Activated CD8-positive, alpha-beta T cell treated with anti-CD3 and anti-CD28 coated beads, Interleukin-2, amount 10 ng/mL, durations not matched to agents 7 days and 5 days (primary cell): ENCODE measurements at regions of chr7 and their contacts with region 1.

Region 1: GRCh38 chr7:111029574-111030251 is 61.2 kb upstream of the LRRN3 start:
- DNase-seq: peak; percentile 37
- ATAC-seq: no peak
- H3K4me3 Mint-ChIP-seq: peak overlapping the region; percentile 32
- H3K27ac Mint-ChIP-seq: peak overlapping the region; percentile 72
- H3K4me1 Mint-ChIP-seq: peaks cover 55% of the 10 kb centered on the region
- H3K27me3 Mint-ChIP-seq: no peaks in the 10 kb centered on the region

Region 2: GRCh38 chr7:111076205-111076604 is 46.5 kb after region 1 on chr7:
- CTCF ChIA-PET with region 1: interaction called, 28 read pairs
- POLR2A ChIA-PET with region 1: interaction called, 69 read pairs
- DNase-seq: peak; percentile 54
- ATAC-seq: peak; percentile 61
- H3K4me3 Mint-ChIP-seq: no peak overlapping the region
- H3K27ac Mint-ChIP-seq: peak overlapping the region; percentile 53
- H3K4me1 Mint-ChIP-seq: peaks cover 73% of the 10 kb centered on the region
- H3K27me3 Mint-ChIP-seq: no peaks in the 10 kb centered on the region

Region 3: DNA sequence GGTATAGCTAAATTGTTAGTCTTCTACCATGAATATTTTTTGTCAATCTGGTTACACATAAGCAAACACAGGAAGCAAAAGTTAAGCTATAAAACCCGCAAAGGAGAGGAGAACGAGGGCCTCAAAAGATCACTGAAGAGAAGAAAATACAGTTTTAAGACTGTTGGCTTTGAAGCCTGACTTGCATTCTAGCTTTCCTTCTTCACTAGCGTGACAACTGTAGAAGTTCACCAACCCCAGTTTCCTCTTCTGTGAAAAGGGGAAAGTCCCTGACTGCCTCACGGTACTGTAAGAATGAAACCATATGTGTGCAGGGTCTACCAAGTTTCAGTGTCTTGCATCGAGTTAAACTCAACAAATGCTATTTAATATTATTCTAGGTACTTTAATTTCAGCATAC is 53.7 kb after region 1 on chr7:
- CTCF ChIA-PET with region 1: interaction called, 7 read pairs
- POLR2A ChIA-PET with region 1: interaction called, 69 read pairs
- DNase-seq: peak; percentile 86
- ATAC-seq: peak; percentile 88
- H3K4me3 Mint-ChIP-seq: peak overlapping the region; percentile 69
- H3K27ac Mint-ChIP-seq: peak overlapping the region; percentile 93
- H3K4me1 Mint-ChIP-seq: peaks cover 76% of the 10 kb centered on the region
- H3K27me3 Mint-ChIP-seq: no peaks in the 10 kb centered on the region

Region 4: GRCh38 chr7:111089822-111090426 is 60.2 kb after region 1 on chr7:
- CTCF ChIA-PET with region 1: interaction called, 6 read pairs
- POLR2A ChIA-PET with region 1: interaction called, 34 read pairs
- DNase-seq: no peak
- ATAC-seq: no peak
- H3K4me3 Mint-ChIP-seq: peak overlapping the region; percentile 95
- H3K27ac Mint-ChIP-seq: no peak overlapping the region
- H3K4me1 Mint-ChIP-seq: peaks cover 47% of the 10 kb centered on the region
- H3K27me3 Mint-ChIP-seq: no peaks in the 10 kb centered on the region